ENCODE measurements at regions of chr3 and their contacts with region 1.

Region 1: GRCh38 chr3:158109804-158110657 is at the start of gene RSRC1:
- DNase-seq: peak; percentile 42 to 81 (median 73)
- ATAC-seq: peak; percentile 96
- H3K4me3 ChIP-seq: peak within 1 kb of the TSS; percentile 90
- H3K4me3 Mint-ChIP-seq: peak within 1 kb of the TSS; percentile 91 to 100 (median 98)
- H3K27ac ChIP-seq: peak within 1 kb of the TSS; percentile 61
- H3K27ac Mint-ChIP-seq: peak within 1 kb of the TSS; percentile 61 to 96 (median 88)
- H3K4me1 ChIP-seq: peaks cover 26 to 37% of the 10 kb centered on the region in 2 donors
- H3K4me1 Mint-ChIP-seq: peaks cover 39 to 84% (median 65%) of the 10 kb centered on the region in 7 donors
- H3K27me3 ChIP-seq: peaks cover 18 to 34% of the 10 kb centered on the region in 2 donors
- H3K27me3 Mint-ChIP-seq: peaks cover 34 to 45% (median 39%) of the 10 kb centered on the region in 5 donors
- total RNA-seq, gene RSRC1: 30.0 to 45.0 (median 37.4) TPM

Region 2: DNA sequence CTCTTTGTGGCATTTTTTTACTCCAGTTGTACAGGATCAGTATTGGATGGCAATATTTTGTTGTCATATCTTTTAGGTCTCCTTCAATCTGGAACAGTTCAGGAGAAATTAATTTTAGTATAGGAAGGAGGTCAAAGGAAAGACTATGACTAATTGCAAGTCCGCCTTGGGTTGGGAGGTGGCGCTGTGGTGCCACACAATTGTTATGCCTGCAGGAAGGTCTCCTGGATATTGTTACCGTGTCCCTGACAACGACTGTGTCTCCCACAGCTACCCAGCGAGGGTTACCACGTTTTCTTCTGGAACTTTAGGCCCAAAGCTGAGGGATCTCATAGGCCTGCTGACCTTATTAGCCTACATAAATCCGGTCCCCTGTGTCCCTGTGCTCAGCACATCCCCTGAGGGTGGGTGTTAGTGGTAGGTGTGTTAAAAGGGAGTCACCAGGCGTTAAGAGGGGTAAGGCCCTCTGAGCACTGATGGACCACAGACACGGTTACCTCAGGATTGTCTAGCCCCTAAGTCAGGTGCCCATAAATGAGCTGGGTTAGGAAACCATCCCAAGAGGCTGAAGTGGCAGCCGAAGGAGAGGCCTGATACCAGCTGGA is 1958.1 kb before region 1 on chr3:
- CTCF ChIA-PET with region 1: no interaction called
- POLR2A ChIA-PET with region 1: no interaction called
- intact Hi-C with region 1: no loop called
- DNase-seq: peak in 7 of 9 donors; percentile 18 to 40 (median 27)
- ATAC-seq: peak; percentile 58
- H3K4me3 ChIP-seq: no peak overlapping the region
- H3K4me3 Mint-ChIP-seq: no peak overlapping the region
- H3K27ac ChIP-seq: no peak overlapping the region
- H3K27ac Mint-ChIP-seq: no peak overlapping the region
- H3K4me1 ChIP-seq: no peaks in the 10 kb centered on the region
- H3K4me1 Mint-ChIP-seq: peaks cover 0 to 7% (median 0%) of the 10 kb centered on the region in 7 donors
- H3K27me3 ChIP-seq: no peaks in the 10 kb centered on the region
- H3K27me3 Mint-ChIP-seq: peaks cover 0 to 18% (median 0%) of the 10 kb centered on the region in 5 donors

Region 3: DNA sequence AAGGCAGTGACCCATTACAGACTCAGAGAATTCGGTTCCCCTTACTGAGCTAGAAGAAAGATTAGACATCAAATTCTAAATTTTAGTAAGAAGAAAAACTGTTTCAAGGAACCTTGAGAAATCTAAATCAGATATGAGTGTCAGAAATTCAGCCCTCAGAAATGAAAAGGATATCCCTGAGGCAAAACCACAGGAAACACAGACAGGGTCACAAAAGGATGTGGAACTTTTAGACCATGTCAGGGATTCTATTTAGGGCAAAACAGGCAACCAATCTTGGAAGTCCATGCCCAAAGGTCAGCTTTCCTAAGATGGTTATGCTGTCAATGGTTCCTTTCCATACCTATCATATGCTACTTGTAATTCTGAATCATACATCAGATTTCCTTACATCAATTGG is 35.4 kb before region 1 on chr3:
- CTCF ChIA-PET with region 1: no interaction called
- POLR2A ChIA-PET with region 1: no interaction called
- intact Hi-C with region 1: no loop called
- DNase-seq: no peak
- ATAC-seq: no peak
- H3K4me3 ChIP-seq: no peak overlapping the region
- H3K4me3 Mint-ChIP-seq: no peak overlapping the region
- H3K27ac ChIP-seq: no peak overlapping the region
- H3K27ac Mint-ChIP-seq: no peak overlapping the region
- H3K4me1 ChIP-seq: no peaks in the 10 kb centered on the region
- H3K4me1 Mint-ChIP-seq: no peaks in the 10 kb centered on the region
- H3K27me3 ChIP-seq: no peaks in the 10 kb centered on the region
- H3K27me3 Mint-ChIP-seq: peaks cover 0 to 32% (median 31%) of the 10 kb centered on the region in 5 donors

Region 4: DNA sequence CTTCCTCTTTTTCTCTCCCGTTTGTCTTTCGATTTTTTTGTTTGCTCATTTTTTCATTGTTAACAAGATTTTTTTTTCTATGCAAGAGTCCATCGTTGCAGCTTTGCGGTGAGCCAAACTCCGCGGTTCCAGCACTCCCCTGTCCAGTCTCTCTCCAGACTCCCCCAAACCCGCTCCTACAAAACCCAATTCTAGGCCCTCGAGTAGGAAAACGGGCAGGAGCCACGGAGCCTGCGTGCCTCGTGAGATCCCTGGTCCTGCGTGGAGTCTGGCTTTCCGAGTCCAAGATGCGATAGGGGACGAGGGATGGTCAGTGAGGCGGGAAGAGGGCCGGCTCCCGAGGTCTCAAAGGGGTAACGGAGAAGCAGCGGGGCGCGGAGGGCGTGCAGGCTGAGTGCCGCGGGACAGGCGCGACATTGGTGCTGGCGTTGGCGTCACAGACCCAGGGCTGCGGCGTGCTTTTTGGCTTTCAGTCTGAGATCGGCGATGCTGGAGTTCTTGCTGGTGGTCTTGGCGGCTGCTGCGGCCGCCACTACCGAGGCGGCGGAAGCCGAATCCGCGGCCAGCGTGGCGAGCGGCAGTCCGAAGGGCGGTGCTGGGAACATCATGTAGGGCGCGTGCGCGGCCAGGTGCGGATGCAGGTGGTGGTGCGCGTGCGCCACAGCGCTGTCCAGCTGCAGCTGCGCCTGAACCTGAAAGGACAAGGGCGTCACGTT is 12.3 kb before region 1 on chr3:
- CTCF ChIA-PET with region 1: no interaction called
- POLR2A ChIA-PET with region 1: interaction called, 31 read pairs
- intact Hi-C with region 1: loop called (anchors 1 kb)
- DNase-seq: peak; percentile 60 to 78 (median 73)
- ATAC-seq: peak; percentile 94
- H3K4me3 ChIP-seq: peak overlapping the region; percentile 46
- H3K4me3 Mint-ChIP-seq: peak overlapping the region; percentile 79 to 93 (median 89)
- H3K27ac ChIP-seq: no peak overlapping the region
- H3K27ac Mint-ChIP-seq: peak overlapping the region in 7 of 9 donors; percentile 73 to 89 (median 85)
- H3K4me1 ChIP-seq: peaks cover 6 to 11% of the 10 kb centered on the region in 2 donors
- H3K4me1 Mint-ChIP-seq: peaks cover 15 to 27% (median 24%) of the 10 kb centered on the region in 7 donors
- H3K27me3 ChIP-seq: peaks cover 28 to 74% of the 10 kb centered on the region in 2 donors
- H3K27me3 Mint-ChIP-seq: peaks cover 87 to 95% (median 90%) of the 10 kb centered on the region in 5 donors

Region 5: DNA sequence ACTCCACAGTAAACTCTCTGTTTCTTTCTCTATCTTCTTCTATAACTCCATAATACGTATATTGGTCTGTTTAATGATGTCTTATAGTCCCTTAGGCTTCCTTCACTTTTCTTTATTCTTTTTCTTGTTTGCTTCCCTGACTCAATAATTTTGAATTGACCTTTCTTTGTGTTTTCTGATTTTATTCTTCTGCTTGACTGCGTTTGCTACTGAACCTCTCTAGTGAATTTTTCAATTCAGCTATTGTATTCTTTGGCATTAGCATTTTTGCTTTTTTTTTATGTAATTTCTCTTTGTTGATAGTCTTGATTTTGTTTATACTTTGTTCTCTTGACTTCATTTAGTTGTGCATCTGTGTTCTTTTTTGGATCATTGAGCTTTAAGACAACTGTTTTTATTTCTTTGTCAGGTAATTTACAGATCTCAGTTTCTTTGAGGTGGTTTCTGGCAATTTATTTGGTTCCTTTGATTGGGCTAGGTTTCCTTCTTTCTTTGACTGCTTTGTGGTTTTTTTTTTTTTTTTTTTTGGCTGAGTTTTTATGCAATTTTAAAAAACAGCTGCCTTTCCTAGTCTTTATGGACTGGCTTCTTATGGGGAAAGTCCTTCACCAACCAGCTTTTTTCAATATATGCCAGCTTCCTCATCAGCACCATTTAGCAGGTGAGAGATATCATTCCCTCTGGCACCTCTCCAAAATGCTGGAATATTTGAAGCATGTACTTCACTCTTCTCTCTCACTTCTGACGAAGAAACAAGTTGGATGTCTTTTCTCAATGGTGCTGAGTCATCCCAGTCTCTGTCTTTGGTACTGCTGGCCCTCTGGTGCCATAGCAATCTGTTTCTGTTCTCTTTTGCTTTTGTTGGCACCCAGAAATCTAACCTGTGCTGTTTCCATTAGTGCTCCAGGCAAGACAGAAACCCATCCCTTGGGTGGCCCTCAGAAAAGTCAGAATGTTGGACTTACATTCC is 17.5 kb after region 1 on chr3:
- CTCF ChIA-PET with region 1: no interaction called
- POLR2A ChIA-PET with region 1: no interaction called
- intact Hi-C with region 1: loop called in 1 of 2 experiments (anchors 1 kb)
- DNase-seq: no peak
- ATAC-seq: no peak
- H3K4me3 ChIP-seq: no peak overlapping the region
- H3K4me3 Mint-ChIP-seq: peak overlapping the region in 3 of 10 donors; percentile 0 to 19 (median 14)
- H3K27ac ChIP-seq: no peak overlapping the region
- H3K27ac Mint-ChIP-seq: peak overlapping the region in 3 of 9 donors; percentile 20 to 65 (median 28)
- H3K4me1 ChIP-seq: no peaks in the 10 kb centered on the region
- H3K4me1 Mint-ChIP-seq: peaks cover 4 to 18% (median 8%) of the 10 kb centered on the region in 7 donors
- H3K27me3 ChIP-seq: no peaks in the 10 kb centered on the region
- H3K27me3 Mint-ChIP-seq: no peaks in the 10 kb centered on the region

Region 6: GRCh38 chr3:158249183-158249582 is 139.2 kb after region 1 on chr3:
- CTCF ChIA-PET with region 1: no interaction called
- POLR2A ChIA-PET with region 1: no interaction called
- intact Hi-C with region 1: no loop called
- DNase-seq: no peak
- ATAC-seq: no peak
- H3K4me3 ChIP-seq: no peak overlapping the region
- H3K4me3 Mint-ChIP-seq: no peak overlapping the region
- H3K27ac ChIP-seq: no peak overlapping the region
- H3K27ac Mint-ChIP-seq: no peak overlapping the region
- H3K4me1 ChIP-seq: no peaks in the 10 kb centered on the region
- H3K4me1 Mint-ChIP-seq: peaks cover 0 to 24% (median 6%) of the 10 kb centered on the region in 7 donors
- H3K27me3 ChIP-seq: no peaks in the 10 kb centered on the region
- H3K27me3 Mint-ChIP-seq: no peaks in the 10 kb centered on the region

Region 7: DNA sequence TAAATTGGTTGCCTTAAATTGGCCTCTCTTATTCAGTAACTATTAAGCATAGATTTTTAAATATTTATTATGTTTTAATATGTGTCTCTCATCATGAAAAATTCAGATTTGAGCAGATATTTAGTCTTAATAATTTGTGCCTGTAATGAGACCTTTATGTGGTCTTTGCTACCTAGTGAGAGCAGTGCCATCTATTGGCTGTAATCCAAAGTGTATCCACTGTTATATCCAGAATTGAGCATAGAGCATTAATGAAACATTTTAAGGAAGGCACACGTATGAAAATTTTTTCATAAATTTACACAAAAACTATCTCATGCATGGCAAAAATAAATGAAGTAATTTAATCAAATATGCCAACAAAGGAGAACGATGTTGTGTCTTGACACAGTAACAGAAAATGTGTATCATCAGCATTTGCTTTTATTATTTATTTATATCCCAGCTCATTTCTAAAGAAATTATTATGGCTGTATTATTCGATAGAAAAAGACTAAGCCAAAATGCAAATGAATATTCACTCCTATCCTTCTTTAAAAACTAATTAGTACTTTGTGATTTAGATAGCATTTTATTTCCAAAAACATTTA is 203.4 kb after region 1 on chr3:
- CTCF ChIA-PET with region 1: no interaction called
- POLR2A ChIA-PET with region 1: no interaction called
- intact Hi-C with region 1: loop called in 1 of 2 experiments (anchors 5 kb)
- DNase-seq: peak in 1 of 9 donors; percentile 2
- ATAC-seq: peak; percentile 44
- H3K4me3 ChIP-seq: no peak overlapping the region
- H3K4me3 Mint-ChIP-seq: no peak overlapping the region
- H3K27ac ChIP-seq: no peak overlapping the region
- H3K27ac Mint-ChIP-seq: no peak overlapping the region
- H3K4me1 ChIP-seq: no peaks in the 10 kb centered on the region
- H3K4me1 Mint-ChIP-seq: no peaks in the 10 kb centered on the region
- H3K27me3 ChIP-seq: no peaks in the 10 kb centered on the region
- H3K27me3 Mint-ChIP-seq: no peaks in the 10 kb centered on the region

Region 8: GRCh38 chr3:158395421-158395820 is 285.4 kb after region 1 on chr3:
- CTCF ChIA-PET with region 1: no interaction called
- POLR2A ChIA-PET with region 1: no interaction called
- intact Hi-C with region 1: no loop called
- DNase-seq: no peak
- ATAC-seq: no peak
- H3K4me3 ChIP-seq: no peak overlapping the region
- H3K4me3 Mint-ChIP-seq: no peak overlapping the region
- H3K27ac ChIP-seq: no peak overlapping the region
- H3K27ac Mint-ChIP-seq: no peak overlapping the region
- H3K4me1 ChIP-seq: no peaks in the 10 kb centered on the region
- H3K4me1 Mint-ChIP-seq: no peaks in the 10 kb centered on the region
- H3K27me3 ChIP-seq: no peaks in the 10 kb centered on the region
- H3K27me3 Mint-ChIP-seq: no peaks in the 10 kb centered on the region

Region 9: DNA sequence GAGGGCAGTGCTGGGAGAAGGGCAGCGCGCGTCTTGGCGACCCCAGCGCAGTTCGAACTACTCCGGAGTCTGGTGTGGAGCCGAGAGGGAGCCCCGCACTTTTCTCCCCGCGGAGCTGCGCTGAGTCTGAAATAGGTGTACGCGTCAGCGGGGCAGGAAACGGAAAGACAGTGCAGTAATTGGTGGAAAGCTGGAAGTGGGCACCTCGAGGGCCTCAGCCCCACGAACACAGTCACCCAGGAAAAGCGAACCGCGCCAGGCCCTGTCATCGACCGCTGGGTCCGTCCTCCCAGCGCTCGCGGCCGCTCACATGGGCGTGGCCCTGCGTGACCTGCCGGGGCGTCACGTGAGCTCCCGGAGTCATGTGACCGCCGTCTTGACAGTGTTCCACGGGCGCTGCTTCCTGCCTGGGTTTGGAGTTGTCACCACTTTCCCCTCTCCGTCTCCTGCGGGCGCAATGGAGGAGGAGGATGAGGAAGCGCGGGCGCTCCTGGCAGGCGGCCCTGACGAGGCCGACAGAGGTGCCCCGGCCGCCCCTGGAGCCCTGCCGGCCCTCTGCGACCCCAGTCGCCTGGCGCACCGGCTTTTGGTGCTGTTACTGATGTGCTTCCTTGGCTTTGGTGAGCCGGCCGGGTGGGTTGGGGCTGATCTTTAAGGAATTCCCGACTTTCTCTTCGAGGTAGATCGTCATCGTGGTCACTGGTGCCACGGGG is 691.8 kb after region 1 on chr3 and contains the start of gene MFSD1:
- CTCF ChIA-PET with region 1: no interaction called
- POLR2A ChIA-PET with region 1: no interaction called
- intact Hi-C with region 1: loop called in 1 of 2 experiments (anchors 1 kb)
- DNase-seq: peak; percentile 73 to 91 (median 83)
- ATAC-seq: peak; percentile 94
- H3K4me3 ChIP-seq: peak within 1 kb of the TSS; percentile 88
- H3K4me3 Mint-ChIP-seq: peak within 1 kb of the TSS; percentile 84 to 93 (median 90)
- H3K27ac ChIP-seq: peak within 1 kb of the TSS; percentile 76
- H3K27ac Mint-ChIP-seq: peak within 1 kb of the TSS; percentile 58 to 98 (median 92)
- H3K4me1 ChIP-seq: peaks cover 9 to 11% of the 10 kb centered on the region in 2 donors
- H3K4me1 Mint-ChIP-seq: peaks cover 24 to 50% (median 43%) of the 10 kb centered on the region in 7 donors
- H3K27me3 ChIP-seq: no peaks in the 10 kb centered on the region
- H3K27me3 Mint-ChIP-seq: peaks cover 0 to 24% (median 0%) of the 10 kb centered on the region in 5 donors
- total RNA-seq, gene MFSD1: 24.6 to 66.0 (median 31.1) TPM

Measured in naive thymus-derived CD4-positive, alpha-beta T cell (primary cell).